ENCODE measurements at regions of chr2 and their contacts with region 1.

Region 1: DNA sequence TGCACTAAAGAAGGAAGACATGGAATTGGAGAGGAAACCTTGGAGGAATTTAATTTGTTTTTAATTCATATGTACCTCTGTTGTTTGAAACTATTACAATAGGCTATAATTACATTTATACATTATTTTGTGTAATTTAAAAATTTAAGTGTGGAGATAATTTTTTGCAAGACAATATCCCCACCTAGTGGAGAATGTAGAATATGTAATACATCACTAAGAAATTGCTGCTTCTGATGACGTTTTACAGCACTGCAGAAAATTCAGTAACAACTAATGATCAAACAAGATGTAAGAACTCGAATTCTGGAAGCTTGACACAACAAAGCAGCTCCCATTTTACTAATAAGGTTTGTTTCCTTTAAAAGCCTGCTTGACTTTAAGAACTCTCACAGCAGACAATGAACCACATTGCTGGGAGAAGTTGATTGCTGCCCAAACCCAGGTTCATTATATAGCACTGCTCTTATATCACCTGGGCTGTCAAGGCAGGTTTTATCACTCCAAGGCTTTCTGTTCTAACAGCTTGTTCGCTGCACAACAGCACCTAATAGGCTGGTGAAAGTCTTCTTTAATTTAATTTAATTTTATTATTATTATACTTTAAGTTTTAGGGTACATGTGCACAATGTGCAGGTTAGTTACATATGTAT is 53.4 kb downstream of the THADA start:
- DNase-seq: no peak
- H3K4me3 Mint-ChIP-seq: no peak overlapping the region
- H3K27ac Mint-ChIP-seq: no peak overlapping the region
- H3K4me1 Mint-ChIP-seq: peaks cover 11% of the 10 kb centered on the region
- H3K27me3 Mint-ChIP-seq: no peaks in the 10 kb centered on the region

Region 2: DNA sequence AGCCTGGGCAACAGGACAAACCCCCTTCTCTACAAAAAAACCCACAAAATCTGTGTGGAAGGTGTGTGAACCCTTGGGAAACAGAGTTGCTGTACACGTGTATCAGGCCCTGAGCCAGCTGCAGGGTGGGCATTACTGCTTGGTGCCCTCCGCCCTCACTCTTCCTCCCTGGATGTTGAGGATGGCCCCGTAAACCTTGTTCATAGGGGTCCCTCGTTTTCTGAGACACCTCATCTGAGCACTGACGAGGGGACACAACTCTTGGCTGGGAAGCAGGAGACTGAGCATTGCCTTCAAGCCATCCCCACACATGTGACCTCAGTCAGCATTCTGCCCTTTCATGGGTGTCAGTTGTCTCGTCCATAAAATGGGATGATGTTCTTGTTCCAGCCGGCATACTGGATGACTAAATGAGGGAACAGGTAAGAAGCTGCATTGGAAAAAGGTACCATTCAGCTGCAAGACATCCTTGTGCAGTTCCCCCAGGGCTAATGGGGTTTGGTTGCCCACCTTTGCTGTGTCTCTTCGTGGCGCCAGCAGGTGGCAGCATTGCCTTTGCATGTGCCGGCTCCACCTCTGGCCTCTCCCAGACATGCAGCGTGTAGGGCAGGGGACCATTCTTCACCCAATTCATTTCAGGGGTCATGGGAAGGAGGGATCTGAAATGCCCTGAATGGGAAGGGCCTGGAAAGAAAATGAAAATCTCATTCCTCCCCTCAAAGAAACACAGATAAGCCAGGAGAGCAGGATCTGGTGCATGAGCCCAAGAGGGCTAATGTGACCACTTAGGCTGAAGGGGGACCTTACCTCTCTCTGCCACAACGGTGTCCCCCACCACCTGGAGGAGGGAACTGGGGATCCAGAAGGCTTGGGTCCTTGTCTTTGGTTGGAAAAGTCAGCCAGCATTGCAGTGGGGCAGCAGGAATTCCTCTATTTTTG is 713.7 kb before region 1 on chr2:
- CTCF ChIA-PET with region 1: interaction called, 4 read pairs
- intact Hi-C with region 1: loop called (anchors 5 kb)
- DNase-seq: peak; percentile 78
- H3K4me3 Mint-ChIP-seq: no peak overlapping the region
- H3K27ac Mint-ChIP-seq: no peak overlapping the region
- H3K4me1 Mint-ChIP-seq: peaks cover 16% of the 10 kb centered on the region
- H3K27me3 Mint-ChIP-seq: no peaks in the 10 kb centered on the region

Region 3: DNA sequence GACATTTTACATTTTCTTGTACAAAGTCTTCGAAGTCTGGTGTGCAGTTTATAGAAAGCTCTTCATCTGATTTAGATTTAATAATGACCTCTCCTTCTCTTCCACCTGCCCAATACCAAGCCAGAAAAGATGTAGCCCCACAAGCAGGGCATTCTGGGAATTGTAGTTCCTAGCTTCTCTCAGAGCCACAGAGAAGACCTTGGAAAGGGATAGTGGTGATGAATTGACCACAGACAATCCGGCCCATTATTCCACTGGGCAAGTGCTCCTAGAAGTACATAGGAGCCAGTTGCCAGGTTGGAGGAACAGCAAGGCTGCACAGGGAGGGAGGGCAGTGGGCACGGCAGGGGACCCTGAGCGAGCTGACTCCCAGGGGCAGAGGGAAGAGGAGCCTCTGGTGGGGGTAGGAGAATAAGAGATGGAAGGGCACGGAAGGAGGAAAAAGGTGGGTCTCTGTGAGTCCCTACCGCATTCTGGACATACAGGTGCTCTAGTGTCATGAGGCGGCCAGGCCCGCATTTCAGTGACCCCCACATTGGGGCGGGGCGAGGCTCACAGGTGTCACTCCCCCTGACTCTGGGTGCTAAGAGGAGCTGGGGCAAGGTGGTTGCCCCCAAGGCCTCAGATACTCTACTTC is 597.5 kb before region 1 on chr2:
- CTCF ChIA-PET with region 1: no interaction called
- intact Hi-C with region 1: loop called (anchors 1 kb)
- DNase-seq: no peak
- H3K4me3 Mint-ChIP-seq: no peak overlapping the region
- H3K27ac Mint-ChIP-seq: no peak overlapping the region
- H3K4me1 Mint-ChIP-seq: peaks cover 2% of the 10 kb centered on the region
- H3K27me3 Mint-ChIP-seq: no peaks in the 10 kb centered on the region

Region 4: DNA sequence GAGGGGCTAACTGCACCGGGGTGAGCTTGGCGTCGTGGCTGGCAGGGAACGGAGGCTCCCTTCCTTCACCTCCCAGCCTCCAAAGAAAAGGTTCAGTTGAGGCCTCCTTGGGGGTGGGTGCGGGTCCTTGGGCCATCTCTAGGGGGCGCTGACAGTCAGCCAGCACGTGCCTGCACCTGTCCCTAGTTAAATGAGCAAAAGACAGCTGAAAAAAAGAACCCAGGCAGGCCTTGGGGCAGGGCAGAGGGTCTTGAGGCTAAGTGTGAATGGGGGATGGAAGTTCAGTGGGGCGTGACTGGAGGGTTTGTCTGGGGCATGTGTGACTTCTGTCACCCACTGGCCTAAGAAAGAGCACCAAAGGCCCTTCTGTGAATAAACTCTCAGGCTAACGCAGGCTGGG is 372.4 kb before region 1 on chr2:
- CTCF ChIA-PET with region 1: no interaction called
- intact Hi-C with region 1: loop called (anchors 5 kb)
- DNase-seq: peak; percentile 89
- H3K4me3 Mint-ChIP-seq: peak overlapping the region; percentile 42
- H3K27ac Mint-ChIP-seq: peak overlapping the region; percentile 61
- H3K4me1 Mint-ChIP-seq: peaks cover 81% of the 10 kb centered on the region
- H3K27me3 Mint-ChIP-seq: no peaks in the 10 kb centered on the region

Region 5: GRCh38 chr2:43484323-43484930 is 58.0 kb before region 1 on chr2:
- CTCF ChIA-PET with region 1: interaction called, 8 read pairs
- intact Hi-C with region 1: loop called (anchors 2 kb)
- DNase-seq: no peak
- H3K4me3 Mint-ChIP-seq: no peak overlapping the region
- H3K27ac Mint-ChIP-seq: no peak overlapping the region
- H3K4me1 Mint-ChIP-seq: no peaks in the 10 kb centered on the region
- H3K27me3 Mint-ChIP-seq: no peaks in the 10 kb centered on the region

Region 6: GRCh38 chr2:43559391-43560230 is 17.2 kb after region 1 on chr2:
- CTCF ChIA-PET with region 1: interaction called, 11 read pairs
- intact Hi-C with region 1: no loop called
- DNase-seq: peak; percentile 28
- H3K4me3 Mint-ChIP-seq: peak overlapping the region; percentile 24
- H3K27ac Mint-ChIP-seq: peak overlapping the region; percentile 93
- H3K4me1 Mint-ChIP-seq: peaks cover 38% of the 10 kb centered on the region
- H3K27me3 Mint-ChIP-seq: no peaks in the 10 kb centered on the region

Region 7: GRCh38 chr2:43759195-43759594 is 216.8 kb after region 1 on chr2:
- CTCF ChIA-PET with region 1: no interaction called
- intact Hi-C with region 1: no loop called
- DNase-seq: no peak
- H3K4me3 Mint-ChIP-seq: no peak overlapping the region
- H3K27ac Mint-ChIP-seq: no peak overlapping the region
- H3K4me1 Mint-ChIP-seq: peaks cover 3% of the 10 kb centered on the region
- H3K27me3 Mint-ChIP-seq: no peaks in the 10 kb centered on the region